ENCODE measurements at regions of chr10 and their contacts with region 1.

Region 1: DNA sequence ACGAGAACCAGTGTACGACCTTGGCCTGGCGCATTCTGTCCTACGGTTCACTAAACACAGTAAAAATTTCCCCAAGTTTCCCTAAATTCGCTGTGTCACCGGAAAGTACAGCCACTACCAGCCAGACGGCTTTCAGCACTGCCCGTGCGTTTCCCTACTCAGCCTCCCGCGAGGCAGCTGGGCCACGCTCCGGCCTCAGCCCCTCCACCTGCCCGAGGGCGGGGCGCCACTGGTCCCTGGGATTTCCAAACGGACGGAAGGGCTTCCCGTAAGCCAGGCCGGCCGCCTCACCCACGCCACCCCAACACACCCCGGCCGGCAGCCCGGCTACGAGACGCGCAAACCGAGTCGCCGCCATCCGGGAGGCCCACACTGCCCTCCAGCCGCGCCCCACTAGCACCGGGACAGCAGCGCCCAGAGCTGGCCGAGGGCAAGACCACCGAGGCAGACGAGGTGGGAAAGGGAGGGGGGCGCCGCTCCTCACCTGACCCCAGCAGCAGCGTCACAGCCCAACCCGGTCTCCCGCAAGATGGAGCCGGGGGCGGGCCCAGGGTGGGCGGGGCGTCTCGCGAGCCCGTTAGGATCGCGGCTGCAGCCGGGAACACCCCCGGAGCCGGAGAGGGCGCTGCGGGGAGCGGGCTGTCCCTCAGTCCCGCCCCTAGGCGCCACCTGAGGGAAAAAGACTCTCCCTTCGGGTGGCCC is at the start of gene ANXA7:
- DNase-seq: peak; percentile 97 to 98 (median 97)
- ATAC-seq: peak; percentile 94
- H3K4me3 ChIP-seq: peak within 1 kb of the TSS; percentile 76
- H3K4me1 ChIP-seq: peaks cover 17% of the 10 kb centered on the region
- CTCF ChIP-seq: no peak
- total RNA-seq, gene ANXA7: 93.7 to 106 (median 99.9) TPM

Region 2: GRCh38 chr10:73003822-73004221 is 409.9 kb before region 1 on chr10:
- intact Hi-C with region 1: no loop called
- DNase-seq: no peak
- ATAC-seq: no peak
- H3K4me3 ChIP-seq: no peak overlapping the region
- H3K4me1 ChIP-seq: no peaks in the 10 kb centered on the region
- CTCF ChIP-seq: no peak

Region 3: DNA sequence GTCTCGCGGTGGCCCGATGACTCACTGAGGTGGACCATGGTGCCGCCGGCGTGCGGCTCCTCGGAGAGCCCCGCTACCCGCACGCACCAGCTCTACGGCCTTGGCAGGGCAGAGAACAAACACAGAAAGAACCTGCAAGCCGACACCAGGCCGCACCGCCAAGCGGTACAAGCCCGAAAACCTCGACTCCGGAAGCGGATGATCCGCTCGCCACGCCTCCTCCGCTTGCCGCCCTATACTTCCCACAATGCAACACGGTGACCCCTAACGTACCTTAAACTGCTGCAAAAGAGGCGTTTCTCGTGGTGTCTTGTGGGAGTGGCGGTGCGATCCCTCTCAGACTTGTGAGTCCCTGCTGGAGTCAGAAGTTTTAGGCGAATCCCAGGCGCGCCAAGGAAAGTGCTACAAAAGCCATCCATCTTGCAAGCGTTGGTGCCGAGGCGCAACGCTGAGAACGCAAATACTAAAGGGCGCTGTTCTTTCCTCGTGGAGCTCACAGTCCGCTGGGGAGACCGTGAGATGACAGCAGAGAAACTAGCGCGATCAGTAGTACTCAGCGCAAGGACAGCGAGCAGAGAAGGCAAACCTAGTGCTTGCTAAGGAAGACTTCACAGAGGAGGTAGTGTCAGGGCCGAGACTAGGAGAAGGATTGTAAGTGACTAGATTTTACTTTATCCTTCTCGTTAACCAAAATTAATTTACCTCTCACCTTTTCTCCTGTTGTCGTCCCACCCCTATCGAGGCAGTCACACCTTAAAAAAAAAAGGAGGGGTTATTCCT is 161.0 kb before region 1 on chr10 and contains the start of gene MRPS16:
- intact Hi-C with region 1: loop called in 1 of 2 experiments (anchors 5 kb)
- DNase-seq: peak; percentile 93 to 98 (median 94)
- ATAC-seq: peak; percentile 98
- H3K4me3 ChIP-seq: peak within 1 kb of the TSS; percentile 60
- H3K4me1 ChIP-seq: peaks cover 19% of the 10 kb centered on the region
- CTCF ChIP-seq: no peak
- total RNA-seq, gene MRPS16: 76.7 to 108 (median 88.9) TPM

Region 4: GRCh38 chr10:73296946-73297345 is 116.7 kb before region 1 on chr10:
- intact Hi-C with region 1: no loop called
- DNase-seq: no peak
- ATAC-seq: no peak
- H3K4me3 ChIP-seq: no peak overlapping the region
- H3K4me1 ChIP-seq: no peaks in the 10 kb centered on the region
- CTCF ChIP-seq: no peak

Region 5: DNA sequence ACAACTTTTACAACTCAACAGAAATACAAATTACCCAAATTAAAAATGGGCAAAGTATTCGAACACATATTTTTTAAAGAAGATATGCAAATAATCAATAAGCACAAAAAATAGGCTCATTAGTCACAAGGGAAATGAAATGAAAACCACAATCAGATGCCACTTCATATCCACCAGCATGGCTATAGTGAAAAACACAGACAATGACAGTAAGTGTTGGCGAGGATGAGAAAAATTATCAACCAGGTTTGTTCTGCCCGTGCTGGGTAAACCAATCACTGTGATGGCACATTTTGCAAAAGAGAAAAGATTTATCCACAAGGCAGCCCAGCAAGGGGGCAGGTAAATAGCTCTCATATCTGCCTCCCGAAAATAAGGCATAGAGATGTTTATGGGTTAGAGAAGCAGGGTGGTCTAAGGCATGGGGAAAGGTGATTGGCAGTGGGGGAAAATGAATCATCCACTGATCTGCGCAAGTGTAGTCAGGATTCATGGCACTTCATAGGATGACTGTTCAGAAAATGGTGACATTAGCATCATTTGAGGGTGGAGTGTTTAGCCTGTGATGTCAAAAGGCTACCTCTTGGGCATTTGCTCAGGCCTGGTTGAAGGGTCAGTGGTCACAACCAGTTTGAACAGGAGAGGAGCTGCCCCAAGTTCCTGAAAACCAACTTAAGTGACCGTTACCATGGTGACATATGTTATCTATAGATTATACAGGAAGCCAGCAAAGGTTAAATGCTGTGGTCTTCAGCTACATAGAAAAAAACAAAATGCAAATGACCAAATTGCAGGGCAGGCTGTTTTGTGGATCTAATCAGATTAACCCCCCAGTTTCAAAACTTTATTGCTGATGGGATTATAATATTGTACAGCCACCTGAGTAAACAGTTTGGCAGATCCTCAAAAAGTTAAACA is 47.0 kb before region 1 on chr10:
- intact Hi-C with region 1: no loop called
- DNase-seq: no peak
- ATAC-seq: no peak
- H3K4me3 ChIP-seq: no peak overlapping the region
- H3K4me1 ChIP-seq: no peaks in the 10 kb centered on the region
- CTCF ChIP-seq: no peak

Region 6: GRCh38 chr10:73552819-73553715 is 139.4 kb after region 1 on chr10:
- intact Hi-C with region 1: no loop called
- DNase-seq: no peak
- ATAC-seq: peak; percentile 94
- H3K4me3 ChIP-seq: no peak overlapping the region
- H3K4me1 ChIP-seq: peaks cover 10% of the 10 kb centered on the region
- CTCF ChIP-seq: no peak